CD4-positive, alpha-beta T cell (primary cell): ENCODE measurements at regions of chr17 and their contacts with region 1.

Region 1: GRCh38 chr17:55053855-55054254 is 85.3 kb downstream of the STXBP4 start:
- DNase-seq: peak in 2 of 14 experiments; percentile 16 to 24
- ATAC-seq: no peak
- H3K4me3 ChIP-seq: no peak overlapping the region
- H3K4me3 Mint-ChIP-seq: no peak overlapping the region
- H3K27ac ChIP-seq: no peak overlapping the region
- H3K27ac Mint-ChIP-seq: no peak overlapping the region
- H3K4me1 ChIP-seq: no peaks in the 10 kb centered on the region
- H3K4me1 Mint-ChIP-seq: no peaks in the 10 kb centered on the region
- H3K27me3 ChIP-seq: no peaks in the 10 kb centered on the region
- H3K27me3 Mint-ChIP-seq: no peaks in the 10 kb centered on the region
- CTCF ChIP-seq: no peak

Region 2: DNA sequence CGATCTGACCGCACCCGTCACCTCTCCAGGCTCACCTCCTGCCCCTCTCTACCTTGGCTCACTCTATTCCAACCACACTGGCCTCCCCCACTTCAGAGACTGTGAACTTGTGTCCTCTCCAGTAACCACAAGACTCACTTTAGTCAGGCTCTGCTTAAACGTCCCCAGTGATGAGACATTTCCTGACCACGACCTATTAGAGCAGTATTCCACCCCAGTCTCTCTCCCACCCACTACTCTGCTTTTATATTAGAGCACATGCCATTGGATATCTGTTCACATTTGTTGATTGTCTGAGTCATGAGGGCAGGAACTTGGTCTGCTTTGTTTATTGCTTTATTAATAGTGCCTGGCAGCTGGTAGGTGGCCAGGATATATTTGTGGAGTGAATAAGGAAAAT is 105.5 kb before region 1 on chr17:
- CTCF ChIA-PET with region 1: no interaction called
- POLR2A ChIA-PET with region 1: no interaction called
- intact Hi-C with region 1: no loop called
- DNase-seq: no peak
- ATAC-seq: no peak
- H3K4me3 ChIP-seq: no peak overlapping the region
- H3K4me3 Mint-ChIP-seq: no peak overlapping the region
- H3K27ac ChIP-seq: no peak overlapping the region
- H3K27ac Mint-ChIP-seq: no peak overlapping the region
- H3K4me1 ChIP-seq: no peaks in the 10 kb centered on the region
- H3K4me1 Mint-ChIP-seq: no peaks in the 10 kb centered on the region
- H3K27me3 ChIP-seq: peaks cover 0 to 6% of the 10 kb centered on the region in 2 experiments
- H3K27me3 Mint-ChIP-seq: peaks cover 17% of the 10 kb centered on the region
- CTCF ChIP-seq: no peak

Region 3: DNA sequence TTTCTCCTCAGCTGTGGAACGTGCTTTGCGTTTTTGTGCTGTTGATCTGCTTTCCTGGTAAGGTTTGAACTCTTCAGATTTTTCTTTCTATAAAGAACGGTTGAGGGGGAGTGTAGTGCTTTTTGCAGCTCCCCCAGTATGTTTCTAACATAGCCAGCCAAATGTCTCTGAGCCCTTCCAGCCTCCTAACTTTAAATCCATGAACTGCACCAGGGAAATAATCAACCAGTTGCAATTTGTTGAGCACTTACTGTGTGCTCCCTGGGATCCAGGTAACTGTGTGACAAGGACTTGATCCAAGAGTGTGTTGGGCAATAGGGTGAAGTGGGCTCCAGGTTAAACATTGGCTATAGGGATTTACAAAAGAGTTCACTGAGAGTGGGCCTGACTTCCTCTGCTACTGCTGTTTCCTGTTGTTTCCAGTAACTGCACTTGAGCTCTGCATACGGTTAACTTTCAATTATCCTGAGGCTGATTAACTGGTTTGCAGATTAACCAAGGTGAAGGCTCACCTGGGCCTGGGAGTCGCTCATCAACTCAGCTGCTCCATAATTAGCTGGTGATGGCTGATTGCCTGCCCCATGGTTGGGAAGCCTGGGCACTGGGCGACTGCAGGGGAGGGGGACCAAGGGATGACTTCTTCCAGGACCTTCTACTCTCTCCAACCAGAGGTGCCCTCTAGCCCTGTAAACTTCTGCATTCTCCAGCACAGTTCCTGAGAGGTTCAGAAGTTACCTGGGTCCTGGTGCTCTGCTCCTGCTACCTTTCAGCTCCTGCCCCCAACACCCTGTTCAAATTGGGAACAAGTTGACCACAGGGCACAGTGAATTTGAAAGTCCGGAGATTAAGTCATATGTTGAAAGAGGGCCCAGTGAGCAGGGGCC is 230.4 kb after region 1 on chr17:
- CTCF ChIA-PET with region 1: no interaction called
- POLR2A ChIA-PET with region 1: no interaction called
- intact Hi-C with region 1: no loop called
- DNase-seq: peak in 1 of 14 experiments; percentile 6
- ATAC-seq: peak; percentile 24
- H3K4me3 ChIP-seq: no peak overlapping the region
- H3K4me3 Mint-ChIP-seq: no peak overlapping the region
- H3K27ac ChIP-seq: no peak overlapping the region
- H3K27ac Mint-ChIP-seq: no peak overlapping the region
- H3K4me1 ChIP-seq: peaks cover 20% of the 10 kb centered on the region
- H3K4me1 Mint-ChIP-seq: peaks cover 12% of the 10 kb centered on the region
- H3K27me3 ChIP-seq: no peaks in the 10 kb centered on the region
- H3K27me3 Mint-ChIP-seq: no peaks in the 10 kb centered on the region
- CTCF ChIP-seq: no peak

Region 4: DNA sequence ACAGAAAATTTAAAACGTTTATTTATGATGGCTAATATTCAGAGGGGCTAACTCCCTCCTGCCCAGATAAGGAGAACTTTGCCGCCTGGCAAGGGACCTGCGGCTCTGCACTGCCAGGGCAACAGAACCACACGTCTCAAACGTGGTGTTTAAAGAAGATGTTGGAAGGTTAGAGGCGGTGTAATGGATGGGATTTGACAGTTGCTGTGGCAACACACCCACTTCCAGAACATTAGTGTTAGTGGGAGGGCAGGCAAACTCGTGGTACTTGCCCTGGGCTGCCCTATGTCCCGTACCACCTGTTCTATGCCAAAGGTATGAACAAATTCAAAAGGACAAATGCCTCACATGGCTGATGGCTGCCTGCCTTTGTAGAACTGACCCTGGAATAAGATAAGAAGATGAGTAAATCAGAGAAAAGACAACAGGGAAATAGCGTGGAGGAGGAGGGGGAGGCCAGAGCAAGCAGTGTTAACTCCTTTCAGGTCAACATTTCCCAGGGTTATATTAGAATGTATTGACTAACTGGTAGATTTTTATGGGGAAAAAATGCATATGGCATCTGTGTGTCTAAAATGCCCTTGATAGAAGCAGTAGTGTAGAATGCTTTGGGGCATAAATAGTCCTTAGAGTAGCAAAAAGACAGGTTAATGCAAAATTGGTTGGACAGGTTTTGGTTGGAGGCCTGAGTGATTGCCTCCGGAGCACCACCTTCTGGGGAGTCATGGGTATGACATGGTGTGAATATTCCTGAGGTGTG is 241.7 kb after region 1 on chr17:
- CTCF ChIA-PET with region 1: no interaction called
- POLR2A ChIA-PET with region 1: no interaction called
- intact Hi-C with region 1: loop called (anchors 2 to 5 kb)
- DNase-seq: peak; percentile 29 to 76 (median 47)
- ATAC-seq: peak; percentile 85
- H3K4me3 ChIP-seq: no peak overlapping the region
- H3K4me3 Mint-ChIP-seq: no peak overlapping the region
- H3K27ac ChIP-seq: no peak overlapping the region
- H3K27ac Mint-ChIP-seq: no peak overlapping the region
- H3K4me1 ChIP-seq: no peaks in the 10 kb centered on the region
- H3K4me1 Mint-ChIP-seq: no peaks in the 10 kb centered on the region
- H3K27me3 ChIP-seq: no peaks in the 10 kb centered on the region
- H3K27me3 Mint-ChIP-seq: no peaks in the 10 kb centered on the region
- CTCF ChIP-seq: peak; percentile 85